ENCODE measurements at regions of chr14 and their contacts with region 1.

Region 1: GRCh38 chr14:22955702-22956569 is 954 bp downstream of the HAUS4 start:
- DNase-seq: peak; percentile 53
- H3K4me3 ChIP-seq: peak overlapping the region; percentile 52 to 96 (median 94)
- H3K27ac ChIP-seq: peak overlapping the region; percentile 82
- H3K4me1 ChIP-seq: peaks cover 10% of the 10 kb centered on the region
- H3K27me3 ChIP-seq: no peaks in the 10 kb centered on the region
- CTCF ChIP-seq: no peak
- POLR2A ChIP-seq: no peak

Region 2: DNA sequence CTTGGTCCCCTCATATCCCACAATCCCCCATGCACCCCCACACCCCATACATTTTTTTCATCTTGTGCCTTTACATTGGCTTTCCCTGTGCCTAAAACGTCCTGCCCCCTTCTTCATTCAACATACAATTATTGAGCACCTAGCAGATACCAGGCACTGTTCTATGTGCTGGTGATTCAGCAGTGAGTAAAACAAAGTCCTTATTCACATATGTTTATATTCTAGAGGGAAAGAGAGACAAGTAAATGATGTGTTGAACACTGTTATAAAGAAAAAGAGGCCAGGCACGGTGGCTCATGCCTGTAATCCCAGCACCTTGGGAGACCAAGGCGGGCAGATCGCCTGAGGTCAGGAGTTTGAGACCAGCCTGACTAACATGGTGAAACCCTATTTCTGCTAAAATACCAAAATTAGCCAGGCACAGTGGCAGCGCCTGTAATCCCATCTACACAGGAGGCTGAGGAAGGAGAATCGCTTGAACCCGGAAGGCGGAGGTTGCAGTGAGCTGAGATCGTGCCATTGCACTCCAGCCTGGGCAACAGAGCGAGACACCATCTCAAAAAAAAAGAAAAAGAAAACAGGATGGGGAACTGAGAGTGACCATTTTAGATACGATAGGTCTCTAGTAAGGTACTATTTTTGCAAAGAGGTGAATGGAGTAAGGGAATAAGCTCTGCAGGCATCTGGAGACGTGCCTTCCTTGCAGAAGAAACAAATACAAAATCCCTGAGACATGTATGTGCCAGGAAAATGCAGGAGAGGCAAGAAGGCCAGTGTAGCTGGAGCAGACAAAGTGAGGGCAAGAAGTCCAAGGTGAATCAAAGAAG is 152.9 kb before region 1 on chr14:
- CTCF ChIA-PET with region 1: no interaction called
- POLR2A ChIA-PET with region 1: no interaction called
- dilution Hi-C with region 1: no loop called
- intact Hi-C with region 1: no loop called
- DNase-seq: no peak
- H3K4me3 ChIP-seq: no peak overlapping the region
- H3K27ac ChIP-seq: no peak overlapping the region
- H3K4me1 ChIP-seq: no peaks in the 10 kb centered on the region
- H3K27me3 ChIP-seq: no peaks in the 10 kb centered on the region
- CTCF ChIP-seq: no peak
- POLR2A ChIP-seq: no peak

Region 3: DNA sequence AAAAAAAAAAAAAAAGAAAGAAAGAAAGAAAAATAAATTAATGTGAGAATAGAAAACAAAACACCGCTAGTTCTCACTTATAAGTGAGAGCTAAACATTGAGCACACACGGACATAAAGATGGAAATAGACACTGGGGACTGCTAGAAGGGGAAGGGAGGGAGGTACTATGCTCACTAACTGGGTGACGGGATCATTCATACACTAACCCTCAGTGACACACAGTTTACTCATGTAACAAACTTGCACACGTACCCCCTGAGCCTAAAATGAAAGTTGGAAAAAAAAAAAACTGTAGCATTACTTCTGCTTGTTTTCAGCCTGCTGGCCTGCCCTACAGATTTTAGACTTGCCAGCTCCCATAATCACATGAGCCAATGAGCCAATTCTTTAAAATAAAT is 16.3 kb before region 1 on chr14:
- CTCF ChIA-PET with region 1: interaction called, 10 read pairs
- POLR2A ChIA-PET with region 1: interaction called, 6 read pairs
- dilution Hi-C with region 1: no loop called
- intact Hi-C with region 1: no loop called
- DNase-seq: no peak
- H3K4me3 ChIP-seq: no peak overlapping the region
- H3K27ac ChIP-seq: no peak overlapping the region
- H3K4me1 ChIP-seq: no peaks in the 10 kb centered on the region
- H3K27me3 ChIP-seq: no peaks in the 10 kb centered on the region
- CTCF ChIP-seq: no peak
- POLR2A ChIP-seq: no peak

Measured in endothelial cell of umbilical vein (primary cell).